ENCODE measurements at regions of chr6 and their contacts with region 1.

Region 1: DNA sequence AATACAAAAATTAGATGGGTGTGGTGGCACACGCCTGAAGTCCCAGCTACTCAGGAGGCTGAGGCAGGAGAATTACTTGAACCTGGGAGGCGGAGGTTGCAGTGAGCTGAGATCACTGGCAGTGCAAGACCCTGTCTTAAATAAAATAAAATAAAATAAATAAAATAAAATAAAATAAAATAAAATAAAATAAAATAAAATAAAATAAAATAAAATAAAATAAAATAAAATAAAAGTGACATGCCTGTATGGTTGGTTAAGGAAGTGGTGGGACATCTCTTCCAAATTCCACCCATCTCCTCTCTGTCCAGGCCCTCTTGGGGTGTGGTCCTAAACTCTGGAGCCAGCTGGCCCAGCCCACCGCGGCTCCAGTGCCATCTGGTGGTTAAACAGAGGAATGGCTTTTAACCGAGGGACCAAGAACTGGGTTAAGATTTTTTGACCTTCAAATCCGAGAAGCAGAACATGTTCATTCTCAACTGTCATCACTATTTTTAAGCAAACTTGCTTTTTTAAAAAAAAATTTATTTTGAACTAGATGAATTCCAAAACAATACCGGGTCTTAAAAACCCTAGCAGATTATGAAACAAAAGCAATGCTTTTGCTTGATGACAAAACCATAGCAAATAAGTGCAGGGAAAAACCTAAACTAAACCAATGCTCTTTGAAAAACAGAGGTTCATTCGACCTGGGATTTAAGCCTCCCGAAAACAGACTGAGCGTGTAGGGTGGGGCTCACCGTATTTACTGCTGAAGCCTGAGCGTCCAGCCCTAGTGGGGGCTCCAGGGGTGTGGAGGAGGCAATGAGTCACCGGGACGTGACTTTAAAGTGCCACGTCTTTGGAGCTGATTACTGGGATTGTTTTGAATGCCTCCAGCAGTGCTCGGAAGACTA is 68.8 kb downstream of the CDC5L start:
- DNase-seq: peak in 7 of 9 donors; percentile 15 to 45 (median 26)
- ATAC-seq: peak; percentile 80
- H3K4me3 ChIP-seq: no peak overlapping the region
- H3K4me3 Mint-ChIP-seq: no peak overlapping the region
- H3K27ac ChIP-seq: no peak overlapping the region
- H3K27ac Mint-ChIP-seq: peak overlapping the region in 1 of 9 donors; percentile 58
- H3K4me1 ChIP-seq: no peaks in the 10 kb centered on the region
- H3K4me1 Mint-ChIP-seq: peaks cover 0 to 8% (median 0%) of the 10 kb centered on the region in 7 donors
- H3K27me3 ChIP-seq: no peaks in the 10 kb centered on the region
- H3K27me3 Mint-ChIP-seq: peaks cover 0 to 9% (median 3%) of the 10 kb centered on the region in 5 donors

Region 2: DNA sequence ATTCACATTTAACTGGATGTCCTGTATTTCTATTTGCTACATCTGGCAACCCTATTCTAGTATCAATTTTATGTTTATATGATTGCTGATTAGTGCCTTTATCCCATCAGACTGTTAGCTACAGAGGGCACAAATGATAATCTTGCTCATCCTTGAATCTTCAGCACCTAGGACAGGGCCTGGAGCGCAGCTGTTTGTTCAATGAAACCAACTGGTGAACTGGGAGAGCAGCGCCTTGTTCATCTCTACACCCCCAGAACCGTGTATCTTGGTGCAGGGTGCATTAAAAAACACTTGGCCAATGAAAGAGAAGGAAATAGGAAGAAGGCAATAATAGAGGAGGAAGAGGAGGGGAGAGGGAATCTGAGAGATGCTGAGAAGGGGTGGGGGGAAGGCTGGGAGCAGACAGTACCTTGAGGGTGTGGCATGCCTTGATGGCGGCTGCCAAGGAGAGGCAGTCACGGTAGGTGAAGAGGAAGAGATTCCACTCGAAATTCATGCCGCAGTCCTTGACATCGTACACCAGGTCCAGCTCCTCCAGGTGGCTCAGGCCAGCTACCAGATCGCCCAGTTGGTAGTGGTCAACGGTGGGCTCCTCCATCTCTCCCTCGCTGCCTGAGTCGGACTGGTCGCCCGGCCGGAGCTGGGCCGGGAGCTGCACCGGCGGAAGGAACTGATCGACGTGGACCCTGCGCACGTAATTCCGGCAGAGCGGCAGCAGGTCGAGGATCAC is 170.6 kb before region 1 on chr6:
- CTCF ChIA-PET with region 1: no interaction called
- POLR2A ChIA-PET with region 1: no interaction called
- intact Hi-C with region 1: no loop called
- DNase-seq: no peak
- ATAC-seq: no peak
- H3K4me3 ChIP-seq: no peak overlapping the region
- H3K4me3 Mint-ChIP-seq: no peak overlapping the region
- H3K27ac ChIP-seq: no peak overlapping the region
- H3K27ac Mint-ChIP-seq: no peak overlapping the region
- H3K4me1 ChIP-seq: no peaks in the 10 kb centered on the region
- H3K4me1 Mint-ChIP-seq: peaks cover 0 to 4% (median 0%) of the 10 kb centered on the region in 7 donors
- H3K27me3 ChIP-seq: no peaks in the 10 kb centered on the region
- H3K27me3 Mint-ChIP-seq: peaks cover 39 to 57% (median 47%) of the 10 kb centered on the region in 5 donors

Region 3: GRCh38 chr6:44431118-44431725 is 25.1 kb before region 1 on chr6:
- CTCF ChIA-PET with region 1: interaction called, 4 read pairs
- POLR2A ChIA-PET with region 1: no interaction called
- intact Hi-C with region 1: loop called (anchors 1 kb)
- DNase-seq: peak in 6 of 9 donors; percentile 16 to 42 (median 32)
- ATAC-seq: peak; percentile 74
- H3K4me3 ChIP-seq: no peak overlapping the region
- H3K4me3 Mint-ChIP-seq: no peak overlapping the region
- H3K27ac ChIP-seq: no peak overlapping the region
- H3K27ac Mint-ChIP-seq: peak overlapping the region in 2 of 9 donors; percentile 12 to 34
- H3K4me1 ChIP-seq: no peaks in the 10 kb centered on the region
- H3K4me1 Mint-ChIP-seq: peaks cover 0 to 26% (median 10%) of the 10 kb centered on the region in 7 donors
- H3K27me3 ChIP-seq: no peaks in the 10 kb centered on the region
- H3K27me3 Mint-ChIP-seq: no peaks in the 10 kb centered on the region